H1 (cell line): ENCODE measurements at regions of chr3 and their contacts with region 1.

Region 1: DNA sequence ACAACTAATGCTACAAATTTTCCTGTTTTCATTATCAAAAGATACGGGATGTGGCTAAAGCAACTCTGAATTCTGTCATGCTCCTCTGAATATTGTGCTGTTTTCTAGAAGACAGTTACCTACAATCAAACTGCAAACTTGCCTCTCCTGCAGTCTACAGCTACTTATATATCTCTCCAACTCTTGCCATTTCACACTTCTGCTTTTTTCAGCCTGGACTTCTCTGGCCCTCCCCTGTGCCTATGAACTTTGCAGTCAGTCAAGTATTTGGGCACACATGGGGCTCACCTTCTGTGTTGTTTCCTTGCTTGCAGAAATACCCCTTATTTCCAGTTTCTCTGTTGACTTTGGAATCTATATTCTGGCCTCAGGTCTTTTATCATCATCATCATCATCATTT is 575.6 kb downstream of the GRM7 start:
- DNase-seq: no peak
- H3K4me3 ChIP-seq: no peak overlapping the region
- H3K27ac ChIP-seq: no peak overlapping the region
- H3K4me1 ChIP-seq: peaks cover 0 to 2% (median 0%) of the 10 kb centered on the region in 4 experiments; a peak in 1 of 7 replicates
- H3K27me3 ChIP-seq: no peaks in the 10 kb centered on the region
- CTCF ChIP-seq: no peak
- EP300 ChIP-seq: no peak
- POLR2A ChIP-seq: no peak
- RAD21 ChIP-seq: no peak

Region 2: DNA sequence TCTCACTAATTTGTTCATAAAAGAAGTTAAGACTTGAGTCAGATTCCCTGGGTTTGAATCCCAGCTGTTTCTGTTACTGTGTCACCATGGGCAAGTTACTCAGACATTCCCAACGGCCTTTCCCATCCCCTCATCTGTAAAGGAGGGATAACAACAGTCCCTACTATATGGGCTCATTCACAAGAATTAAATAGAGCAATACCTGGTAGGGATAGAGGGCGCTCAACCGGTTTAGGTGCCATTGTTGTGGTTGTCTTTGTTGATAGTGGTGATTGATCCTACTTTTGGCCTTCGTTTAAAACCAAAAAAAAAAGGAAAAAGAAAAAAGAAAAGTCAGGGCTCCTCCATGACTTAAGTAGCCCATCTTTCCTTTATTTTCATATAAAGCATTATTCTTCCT is 12.5 kb before region 1 on chr3:
- CTCF ChIA-PET with region 1: interaction called, 14 read pairs
- POLR2A ChIA-PET with region 1: no interaction called
- DNase-seq: no peak
- H3K4me3 ChIP-seq: no peak overlapping the region
- H3K27ac ChIP-seq: no peak overlapping the region
- H3K4me1 ChIP-seq: no peaks in the 10 kb centered on the region
- H3K27me3 ChIP-seq: no peaks in the 10 kb centered on the region
- CTCF ChIP-seq: peak in 1 of 3 experiments; percentile 9; a peak in 1 of 4 replicates
- EP300 ChIP-seq: no peak
- POLR2A ChIP-seq: no peak
- RAD21 ChIP-seq: peak in 1 of 2 experiments; percentile 16; a peak in 1 of 4 replicates

Region 3: GRCh38 chr3:7669641-7670040 is 233.1 kb after region 1 on chr3:
- CTCF ChIA-PET with region 1: no interaction called
- POLR2A ChIA-PET with region 1: no interaction called
- DNase-seq: no peak
- H3K4me3 ChIP-seq: no peak overlapping the region
- H3K27ac ChIP-seq: no peak overlapping the region
- H3K4me1 ChIP-seq: no peaks in the 10 kb centered on the region
- H3K27me3 ChIP-seq: no peaks in the 10 kb centered on the region
- CTCF ChIP-seq: no peak
- EP300 ChIP-seq: no peak
- POLR2A ChIP-seq: no peak
- RAD21 ChIP-seq: no peak